ENCODE measurements at regions of chr20 and their contacts with region 1.

Region 1: DNA sequence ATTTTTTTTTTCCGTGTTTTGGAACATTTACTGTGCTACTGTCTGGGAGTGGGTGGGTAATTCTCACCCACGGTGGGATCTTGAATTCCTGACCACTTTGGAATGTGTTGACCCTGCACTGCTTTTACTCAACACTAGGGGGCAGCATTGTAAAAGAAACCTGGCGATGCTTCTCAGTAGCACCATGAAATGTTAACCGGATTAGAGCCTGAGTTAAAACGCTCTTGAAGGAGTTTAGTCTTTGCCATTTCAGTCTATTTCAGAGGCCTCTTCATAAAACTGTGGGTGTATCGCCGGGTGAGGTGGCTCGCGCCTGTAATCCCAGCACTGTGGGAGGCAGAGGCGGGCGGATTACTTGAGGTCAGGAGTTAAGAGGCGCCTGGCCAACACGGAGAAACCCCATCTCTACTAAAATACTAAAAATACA is 114.4 kb upstream of the PRND start:
- DNase-seq: peak in 6 of 10 donors; percentile 47 to 86 (median 60)

Region 2: DNA sequence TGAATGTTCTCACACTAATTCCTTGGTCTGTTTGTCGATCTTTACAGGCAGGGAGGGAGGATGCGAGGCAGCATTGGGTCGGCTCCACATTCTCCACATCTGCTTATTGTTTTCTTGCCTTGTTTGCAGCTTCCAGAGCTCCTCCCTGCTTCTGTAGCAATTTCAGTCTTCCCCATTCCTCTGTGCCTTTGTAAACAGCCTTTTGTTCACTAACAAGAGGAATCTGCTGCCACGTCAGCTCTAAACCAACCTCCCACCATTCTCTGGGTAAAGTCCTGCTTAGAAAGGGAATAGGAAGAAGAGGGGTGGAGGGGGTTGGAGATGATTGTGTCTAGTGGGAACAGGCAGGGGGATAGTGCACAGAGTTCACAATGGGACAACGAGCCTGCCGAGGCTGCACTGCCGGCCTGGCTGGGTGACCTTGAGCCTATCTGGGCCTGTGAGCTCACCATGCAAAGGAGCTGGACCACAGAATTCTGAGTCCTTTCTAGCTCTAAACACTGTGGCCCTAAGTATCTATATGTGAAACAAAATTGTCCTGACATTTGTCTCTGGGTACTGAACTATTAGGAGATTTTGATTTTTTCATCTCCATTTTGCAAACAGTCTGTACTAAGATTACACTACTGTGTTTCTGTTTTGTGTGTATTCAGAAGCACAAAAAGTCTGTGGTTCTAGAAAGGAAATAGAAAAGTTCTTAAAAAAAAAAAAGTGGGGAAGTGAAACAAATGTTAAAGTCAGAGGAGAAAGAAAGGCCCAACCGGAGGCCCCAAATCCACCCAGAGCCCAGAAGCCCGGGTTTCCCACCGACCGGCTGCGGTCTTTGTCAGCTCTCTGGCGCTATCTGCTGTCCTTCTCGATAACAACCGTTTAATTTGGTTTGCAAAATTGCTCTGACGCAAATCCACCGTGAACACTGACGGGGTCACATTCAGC is 113.0 kb after region 1 on chr20:
- intact Hi-C with region 1: loop called (anchors 1 kb)
- DNase-seq: peak; percentile 67 to 97 (median 83)

Region 3: GRCh38 chr20:4956200-4956810 is 349.0 kb after region 1 on chr20:
- intact Hi-C with region 1: loop called (anchors 5 kb)
- DNase-seq: peak in 1 of 10 donors; percentile 9

Region 4: DNA sequence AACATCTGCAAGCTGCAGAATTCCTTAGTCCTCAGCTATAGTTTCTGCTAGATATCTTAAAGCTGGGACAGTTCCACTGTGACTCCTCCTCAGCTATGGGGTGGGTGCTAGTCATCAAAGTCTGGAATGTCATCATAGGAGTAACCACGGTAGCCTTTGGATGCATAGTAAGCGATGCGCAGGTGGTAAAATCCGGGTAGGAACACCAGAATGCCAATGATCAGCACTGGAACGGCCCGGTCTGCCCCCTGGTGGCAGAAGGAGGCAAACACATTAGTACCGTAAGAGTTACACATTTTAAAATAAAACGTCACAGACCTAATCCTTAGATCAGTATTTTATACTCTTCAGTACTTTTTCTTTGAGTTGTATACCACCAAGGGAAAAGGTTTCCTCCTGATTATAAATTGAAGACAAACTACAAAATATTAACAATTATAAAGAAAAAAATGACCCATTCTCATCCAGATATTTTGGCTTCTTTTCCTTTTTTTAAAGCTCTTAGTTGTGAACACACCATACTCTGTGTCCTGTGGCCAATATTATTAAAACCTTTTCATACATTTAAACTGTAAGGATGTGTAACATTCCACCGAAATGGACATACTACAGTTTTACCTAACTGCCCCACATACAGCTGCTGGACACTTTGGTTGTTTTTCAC is 493.5 kb after region 1 on chr20:
- intact Hi-C with region 1: loop called (anchors 5 kb)
- DNase-seq: peak; percentile 63 to 97 (median 86)

Measured in posterior cingulate gyrus (tissue), 11 donors.